HEK293 (cell line): ENCODE measurements at regions of chr17 and their contacts with region 1.

Region 1: GRCh38 chr17:38667099-38667786 is 7.5 kb downstream of the EPOP start:
- H3K4me3 ChIP-seq: no peak overlapping the region
- H3K27ac ChIP-seq: no peak overlapping the region
- H3K4me1 ChIP-seq: peaks cover 4% of the 10 kb centered on the region; the same call in 1 of the 2 replicates
- CTCF ChIP-seq: peak; percentile 88

Region 2: GRCh38 chr17:38351412-38352222 is 315.6 kb before region 1 on chr17 and contains the start of gene SOCS7:
- CTCF ChIA-PET with region 1: interaction called, 17 read pairs
- POLR2A ChIA-PET with region 1: no interaction called
- H3K4me3 ChIP-seq: peak within 1 kb of the TSS; percentile 75
- H3K27ac ChIP-seq: peak within 1 kb of the TSS; percentile 83
- H3K4me1 ChIP-seq: peaks cover 11% of the 10 kb centered on the region
- CTCF ChIP-seq: 0 out of 2 replicates have a peak, but pooled peaks have one; percentile 21

Region 3: DNA sequence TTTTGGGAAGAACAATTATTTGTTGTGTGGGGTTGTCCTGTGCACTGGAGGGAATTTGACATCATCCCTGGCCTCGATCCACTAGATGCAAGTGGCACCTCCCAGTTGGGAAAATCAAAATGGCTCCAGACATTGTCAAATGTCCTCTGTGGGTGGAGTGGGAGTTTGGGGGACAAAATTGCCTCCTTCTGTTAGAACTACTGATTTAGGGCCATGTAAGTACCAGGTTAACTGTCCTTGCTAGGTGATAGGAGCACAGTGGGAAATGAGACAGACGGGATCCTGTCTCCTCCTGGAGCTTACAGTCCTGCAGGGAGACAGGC is 182.1 kb before region 1 on chr17:
- CTCF ChIA-PET with region 1: interaction called, 145 read pairs
- POLR2A ChIA-PET with region 1: no interaction called
- H3K4me3 ChIP-seq: no peak overlapping the region
- H3K27ac ChIP-seq: no peak overlapping the region
- H3K4me1 ChIP-seq: no peaks in the 10 kb centered on the region
- CTCF ChIP-seq: no peak

Region 4: DNA sequence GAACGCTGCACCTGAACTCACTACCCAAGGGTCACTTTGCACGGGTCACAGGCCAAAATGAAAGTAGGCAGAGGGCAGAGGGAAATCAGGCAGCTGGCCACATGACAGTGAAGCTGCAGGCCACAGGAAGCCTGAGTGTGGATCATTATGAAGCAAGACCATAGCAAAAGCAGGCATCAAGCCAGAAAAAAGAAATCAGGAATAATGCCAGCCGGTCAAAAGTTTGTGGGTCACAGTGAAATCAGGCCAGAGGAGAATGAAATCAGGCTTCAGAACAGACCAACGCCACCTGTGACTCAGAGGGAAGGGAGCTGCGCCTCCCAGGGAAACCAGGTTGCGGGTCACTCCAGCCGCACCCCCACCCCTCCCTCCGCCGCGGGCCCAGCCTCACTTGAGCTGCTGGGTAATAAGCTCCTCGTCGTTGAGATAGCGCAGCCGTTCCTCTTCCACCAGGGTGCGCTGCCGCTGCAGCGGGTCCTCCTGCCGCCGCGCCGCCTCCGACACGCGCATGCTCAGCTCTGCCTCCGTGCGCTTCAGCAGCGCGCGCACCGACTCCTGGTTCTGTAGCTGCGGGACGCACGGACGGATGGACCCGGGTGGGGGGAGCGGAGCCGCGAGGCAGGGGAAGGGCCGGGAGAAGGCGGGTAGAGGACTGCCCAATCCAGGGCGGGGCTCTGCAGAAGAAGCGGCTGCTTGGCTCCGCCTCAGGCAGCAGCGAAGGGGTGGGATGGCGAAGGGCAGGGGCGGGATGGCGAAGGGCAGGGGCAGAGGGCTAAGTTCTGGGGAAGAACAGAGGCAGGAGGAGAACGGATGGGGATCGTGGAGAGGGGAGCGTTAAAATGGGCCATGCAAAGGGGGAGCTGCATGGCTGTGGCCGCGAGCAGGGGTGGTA is 109.2 kb before region 1 on chr17:
- CTCF ChIA-PET with region 1: interaction called, 254 read pairs
- POLR2A ChIA-PET with region 1: interaction called, 4 read pairs
- H3K4me3 ChIP-seq: peak overlapping the region; percentile 37
- H3K27ac ChIP-seq: no peak overlapping the region
- H3K4me1 ChIP-seq: peaks cover 15% of the 10 kb centered on the region
- CTCF ChIP-seq: peak; percentile 99

Region 5: GRCh38 chr17:38605888-38606645 is 61.2 kb before region 1 on chr17 and contains the start of gene SRCIN1:
- CTCF ChIA-PET with region 1: interaction called, 53 read pairs
- POLR2A ChIA-PET with region 1: no interaction called
- H3K4me3 ChIP-seq: peak within 1 kb of the TSS; percentile 60
- H3K27ac ChIP-seq: peak within 1 kb of the TSS; percentile 46; the same call in 1 of the 2 replicates
- H3K4me1 ChIP-seq: peaks cover 15% of the 10 kb centered on the region
- CTCF ChIP-seq: peak; percentile 98

Region 6: GRCh38 chr17:38654411-38655398 is 12.5 kb before region 1 on chr17:
- CTCF ChIA-PET with region 1: interaction called, 39 read pairs
- POLR2A ChIA-PET with region 1: no interaction called
- H3K4me3 ChIP-seq: no peak overlapping the region
- H3K27ac ChIP-seq: no peak overlapping the region
- H3K4me1 ChIP-seq: no peaks in the 10 kb centered on the region
- CTCF ChIP-seq: no peak

Region 7: DNA sequence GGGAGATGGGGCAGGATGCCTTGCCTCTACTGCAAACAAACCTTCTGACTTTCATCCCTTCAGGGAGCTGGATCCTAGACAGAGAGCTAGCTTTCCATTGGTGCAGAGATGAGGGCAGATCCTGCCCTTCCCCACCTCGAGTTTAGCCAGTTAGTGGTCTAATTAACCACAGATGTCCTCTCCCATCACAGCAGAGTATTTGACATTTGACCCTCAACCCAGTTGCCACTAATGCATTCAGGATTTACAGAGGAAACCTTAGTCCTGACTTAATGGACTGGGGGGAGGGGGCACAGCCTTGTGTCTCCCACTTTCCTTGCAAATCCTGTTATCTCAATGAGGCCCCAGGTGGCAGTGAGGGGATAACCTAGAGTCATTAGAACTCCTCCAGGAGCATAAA is 121.9 kb after region 1 on chr17:
- CTCF ChIA-PET with region 1: no interaction called
- POLR2A ChIA-PET with region 1: no interaction called
- H3K4me3 ChIP-seq: no peak overlapping the region
- H3K27ac ChIP-seq: no peak overlapping the region
- H3K4me1 ChIP-seq: peaks cover 6% of the 10 kb centered on the region; the same call in 1 of the 2 replicates
- CTCF ChIP-seq: no peak

Region 8: DNA sequence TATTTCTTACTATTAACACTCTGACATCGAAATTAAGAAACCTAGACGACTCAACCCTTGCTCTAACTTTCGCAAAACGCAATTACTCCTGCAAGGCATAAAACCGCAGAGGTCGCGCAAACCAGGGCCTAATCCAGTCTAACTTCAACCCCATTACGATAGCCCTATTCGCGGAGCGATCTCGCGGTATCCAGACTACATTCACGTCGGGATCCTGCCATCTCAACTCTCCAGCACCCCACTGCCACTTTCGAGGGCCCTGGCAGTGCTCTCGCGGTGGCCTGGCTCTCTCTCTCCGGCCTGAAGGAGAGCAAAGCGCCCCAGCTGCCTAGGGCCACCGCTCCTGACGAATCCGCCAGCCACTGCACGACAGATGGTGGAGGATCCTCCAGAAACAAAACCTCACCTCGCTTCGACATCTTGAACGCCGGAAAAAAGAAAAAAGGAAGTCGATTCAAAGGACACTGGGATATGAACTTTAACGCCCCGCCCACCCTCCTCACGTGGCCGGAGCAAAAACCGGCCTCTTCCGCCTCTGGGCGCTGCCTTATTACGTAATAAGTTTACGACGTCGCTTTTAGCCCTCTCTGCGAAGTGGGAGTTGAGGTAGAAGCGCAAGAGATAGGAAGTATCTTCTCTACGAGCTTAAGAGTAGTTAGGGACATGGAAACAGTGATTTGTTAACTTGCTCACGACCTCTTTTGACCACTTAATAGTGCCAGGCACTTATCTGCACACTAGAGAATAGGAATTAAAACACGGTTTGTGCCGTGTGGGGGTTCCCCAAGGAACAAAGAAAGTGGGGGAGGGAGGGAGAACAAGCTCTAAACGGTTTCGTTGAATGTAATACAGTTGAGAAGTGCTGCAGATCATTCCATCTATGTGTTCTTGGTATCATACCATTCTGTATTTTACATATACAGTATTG is 186.3 kb after region 1 on chr17 and contains the start of gene RPL23:
- CTCF ChIA-PET with region 1: no interaction called
- POLR2A ChIA-PET with region 1: no interaction called
- H3K4me3 ChIP-seq: peak within 1 kb of the TSS; percentile 86
- H3K27ac ChIP-seq: peak within 1 kb of the TSS; percentile 99
- H3K4me1 ChIP-seq: peaks cover 3% of the 10 kb centered on the region
- CTCF ChIP-seq: no peak